Activated B cell treated with CpG ODN at 0.5 μM for 24 hours (primary cell): ENCODE measurements at regions of chr6 and their contacts with region 1.

Region 1: GRCh38 chr6:152071843-152072242 is 264.4 kb downstream of the ESR1 start:
- DNase-seq: no peak
- ATAC-seq: no peak
- H3K4me3 Mint-ChIP-seq: no peak overlapping the region
- H3K27ac Mint-ChIP-seq: no peak overlapping the region
- H3K4me1 Mint-ChIP-seq: no peaks in the 10 kb centered on the region
- H3K27me3 Mint-ChIP-seq: peaks cover 2% of the 10 kb centered on the region
- CTCF ChIP-seq: no peak

Region 2: DNA sequence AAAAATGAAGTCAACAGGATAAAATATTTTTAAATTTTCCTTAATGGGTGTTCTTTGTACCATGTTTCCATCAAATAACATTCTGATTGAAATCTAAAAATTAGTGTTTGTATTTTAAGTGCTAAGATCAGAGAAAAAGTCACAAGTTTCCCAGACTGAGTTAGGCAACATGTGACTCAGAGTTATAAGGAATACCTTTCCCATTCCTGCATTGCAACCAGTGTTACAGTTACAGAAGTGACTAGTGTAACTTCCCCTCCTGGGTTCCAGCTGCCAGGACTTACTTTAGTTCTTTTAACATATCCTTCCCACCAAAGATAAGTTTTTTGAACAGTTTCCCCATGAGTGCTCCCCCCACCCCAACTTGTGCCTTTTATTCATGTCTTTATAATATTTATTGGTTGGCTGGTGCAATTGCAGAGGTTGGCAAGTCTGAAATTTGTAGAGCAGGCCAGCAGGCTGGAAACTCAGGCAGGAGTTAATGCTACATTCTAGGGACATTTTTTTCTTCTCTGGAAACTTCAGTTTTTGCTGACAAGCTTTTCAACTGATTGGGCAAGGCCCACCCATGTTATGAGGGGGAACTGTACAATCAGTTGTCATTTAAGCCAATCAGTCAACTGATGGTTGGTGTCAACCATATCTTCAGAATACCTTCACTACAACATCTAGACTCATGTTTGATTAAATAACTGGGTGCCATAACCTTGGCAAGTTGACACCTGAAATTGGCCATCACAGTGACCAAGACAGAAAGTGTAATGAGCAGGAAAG is 287.2 kb before region 1 on chr6:
- CTCF ChIA-PET with region 1: no interaction called
- POLR2A ChIA-PET with region 1: no interaction called
- intact Hi-C with region 1: no loop called
- DNase-seq: no peak
- ATAC-seq: no peak
- H3K4me3 Mint-ChIP-seq: no peak overlapping the region
- H3K27ac Mint-ChIP-seq: no peak overlapping the region
- H3K4me1 Mint-ChIP-seq: no peaks in the 10 kb centered on the region
- H3K27me3 Mint-ChIP-seq: no peaks in the 10 kb centered on the region
- CTCF ChIP-seq: no peak

Region 3: DNA sequence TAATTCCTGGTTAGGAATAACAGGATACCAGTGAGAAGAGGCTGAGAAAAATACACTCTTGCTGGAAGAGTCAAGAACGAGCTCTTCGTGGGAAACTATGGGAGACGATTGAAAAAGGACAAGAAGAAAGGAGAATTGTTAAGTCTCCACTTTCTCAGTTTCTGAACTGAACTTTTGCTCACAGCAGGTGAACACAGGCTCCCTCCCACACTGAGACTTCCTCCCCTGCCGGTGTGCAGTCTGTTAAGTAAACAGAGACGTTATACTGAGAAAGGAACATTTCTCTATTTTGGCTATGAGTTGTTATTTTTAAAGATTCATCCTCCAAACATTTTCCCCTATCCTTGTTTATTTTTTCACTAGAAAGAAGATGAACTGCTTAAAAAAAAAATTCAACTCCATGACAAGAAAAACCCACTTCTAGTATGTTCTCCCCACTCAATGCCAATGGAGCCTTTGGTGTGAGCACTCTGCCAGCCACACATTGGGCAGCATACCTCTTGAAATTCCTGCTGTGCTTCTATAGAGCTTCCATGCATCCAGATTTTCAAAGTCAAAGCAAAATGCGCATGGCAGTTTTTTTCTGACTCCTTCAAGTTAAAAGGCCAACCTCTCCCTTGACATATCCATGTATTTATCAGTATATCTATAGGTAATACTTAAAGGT is 13.9 kb before region 1 on chr6:
- CTCF ChIA-PET with region 1: no interaction called
- POLR2A ChIA-PET with region 1: no interaction called
- intact Hi-C with region 1: loop called (anchors 1 kb)
- DNase-seq: no peak
- ATAC-seq: no peak
- H3K4me3 Mint-ChIP-seq: no peak overlapping the region
- H3K27ac Mint-ChIP-seq: no peak overlapping the region
- H3K4me1 Mint-ChIP-seq: no peaks in the 10 kb centered on the region
- H3K27me3 Mint-ChIP-seq: no peaks in the 10 kb centered on the region
- CTCF ChIP-seq: no peak